Activated CD4-positive, alpha-beta T cell treated with anti-CD3 and anti-CD28 coated beads, Interleukin-2, amount 10 ng/mL, durations not matched to agents 24 days and 14 days (primary cell): ENCODE measurements at regions of chr6 and their contacts with region 1.

Region 1: DNA sequence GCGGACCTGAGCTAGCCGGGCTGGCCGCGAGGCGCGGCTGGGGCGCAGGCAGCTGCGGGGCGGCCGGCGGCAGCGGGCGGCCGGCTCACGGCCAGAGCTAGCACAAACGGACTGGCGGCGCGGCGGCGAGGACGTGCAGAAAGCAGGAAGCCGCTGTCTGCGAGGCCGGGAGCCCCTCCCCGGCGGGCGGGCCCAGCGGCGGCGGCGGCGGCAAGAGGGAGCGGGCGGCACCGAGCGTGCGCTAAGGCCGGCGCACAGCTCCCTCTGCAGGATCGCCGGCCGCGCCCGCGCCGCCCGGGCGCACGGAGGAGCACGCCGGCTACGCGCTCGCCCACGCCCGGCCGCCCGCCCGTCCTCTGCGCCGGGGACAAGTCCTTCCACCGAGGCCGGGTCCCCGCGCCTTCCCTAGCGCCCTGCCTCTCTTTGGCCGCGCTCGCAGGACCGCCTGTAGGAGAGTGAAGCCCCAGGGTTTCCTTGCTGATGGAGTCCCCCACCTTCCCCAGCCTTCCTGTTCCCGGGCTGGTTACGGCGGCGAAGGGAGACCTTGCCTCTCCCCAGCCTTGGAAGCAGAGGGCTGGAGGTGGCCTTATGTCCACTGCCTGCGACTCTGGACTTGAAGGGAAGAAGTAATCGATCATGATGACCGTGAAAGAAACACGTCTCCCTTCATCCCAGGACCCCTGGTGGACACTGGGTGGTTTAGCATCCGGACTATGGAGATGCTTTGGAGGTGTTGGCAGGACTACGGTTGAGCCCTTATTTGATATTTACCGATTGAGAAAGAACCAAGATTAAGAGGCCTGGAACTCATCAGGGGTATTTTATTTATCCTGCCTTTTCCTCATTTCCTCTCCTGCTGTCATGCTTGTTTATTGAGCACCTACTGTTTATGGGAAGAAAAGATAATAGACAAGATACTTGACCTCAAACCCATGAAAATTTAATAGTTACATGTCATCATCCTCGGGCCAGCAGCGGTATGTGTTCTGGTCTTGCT is at the start of gene PREP:
- DNase-seq: peak; percentile 96
- H3K4me3 Mint-ChIP-seq: peak within 1 kb of the TSS; percentile 95
- H3K27ac Mint-ChIP-seq: peak within 1 kb of the TSS; percentile 87
- H3K4me1 Mint-ChIP-seq: peaks cover 45% of the 10 kb centered on the region
- H3K27me3 Mint-ChIP-seq: peaks cover 10% of the 10 kb centered on the region
- total RNA-seq, gene PREP: 55.2 and 56.2 TPM in 2 replicates

Region 2: GRCh38 chr6:104789770-104790190 is 613.5 kb before region 1 on chr6:
- intact Hi-C with region 1: loop called (anchors 10 kb)
- DNase-seq: peak; percentile 66
- H3K4me3 Mint-ChIP-seq: peak overlapping the region; percentile 72
- H3K27ac Mint-ChIP-seq: peak overlapping the region; percentile 97
- H3K4me1 Mint-ChIP-seq: peaks cover 32% of the 10 kb centered on the region
- H3K27me3 Mint-ChIP-seq: no peaks in the 10 kb centered on the region

Region 3: DNA sequence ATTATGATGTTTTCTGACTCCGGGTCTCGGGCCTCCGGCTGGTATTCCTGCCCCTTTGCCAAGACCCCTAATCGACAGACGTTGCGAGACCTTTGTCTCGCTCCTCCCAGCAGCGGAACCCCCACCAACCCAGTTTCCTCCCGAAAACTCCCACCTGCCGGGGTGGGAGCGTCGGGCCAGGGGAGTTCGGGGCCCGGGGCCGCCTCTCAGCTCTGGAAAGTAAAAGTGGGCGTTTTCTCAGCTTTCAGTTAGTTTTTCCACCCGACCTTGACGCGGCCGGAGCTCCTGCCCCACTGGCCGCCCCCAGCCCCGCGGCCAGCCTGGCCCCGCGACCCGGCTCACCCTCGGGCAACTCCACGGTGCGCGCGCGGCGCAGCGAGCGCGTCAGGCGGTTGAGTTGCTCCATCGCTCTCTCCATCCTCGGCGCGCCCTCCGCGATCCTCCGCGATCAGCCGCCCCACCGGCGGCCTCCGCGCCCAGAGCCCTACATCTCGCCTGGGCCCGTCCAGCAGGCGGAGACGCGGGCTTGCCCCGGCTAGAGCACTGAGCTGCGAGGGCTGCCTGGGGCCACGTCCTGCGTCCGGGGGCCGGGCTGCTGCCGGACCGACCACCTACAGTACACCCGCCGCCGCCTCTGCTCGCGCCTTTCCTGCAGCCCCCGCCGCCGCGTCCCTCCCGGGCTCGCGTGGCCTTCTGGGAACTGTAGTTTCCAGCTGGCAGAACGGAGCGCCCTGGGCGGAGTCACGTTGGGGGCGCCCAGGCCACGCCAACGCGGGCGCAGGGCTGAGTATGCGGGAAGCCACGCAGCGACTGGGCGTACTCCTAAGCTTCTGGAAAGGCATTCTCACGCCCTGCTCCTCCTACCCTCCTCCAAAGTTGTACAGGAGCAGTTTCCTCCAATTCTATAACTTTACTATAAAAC is 543.8 kb before region 1 on chr6 and contains the start of gene HACE1:
- intact Hi-C with region 1: loop called (anchors 5 kb)
- DNase-seq: peak; percentile 97
- H3K4me3 Mint-ChIP-seq: peak within 1 kb of the TSS; percentile 98
- H3K27ac Mint-ChIP-seq: peak within 1 kb of the TSS; percentile 90
- H3K4me1 Mint-ChIP-seq: peaks cover 24% of the 10 kb centered on the region
- H3K27me3 Mint-ChIP-seq: no peaks in the 10 kb centered on the region
- total RNA-seq, gene HACE1: 18.6 and 21.3 TPM in 2 replicates

Region 4: GRCh38 chr6:105087571-105088211 is 315.5 kb before region 1 on chr6:
- intact Hi-C with region 1: loop called (anchors 1 kb)
- DNase-seq: peak; percentile 77
- H3K4me3 Mint-ChIP-seq: no peak overlapping the region
- H3K27ac Mint-ChIP-seq: no peak overlapping the region
- H3K4me1 Mint-ChIP-seq: no peaks in the 10 kb centered on the region
- H3K27me3 Mint-ChIP-seq: peaks cover 4% of the 10 kb centered on the region

Region 5: DNA sequence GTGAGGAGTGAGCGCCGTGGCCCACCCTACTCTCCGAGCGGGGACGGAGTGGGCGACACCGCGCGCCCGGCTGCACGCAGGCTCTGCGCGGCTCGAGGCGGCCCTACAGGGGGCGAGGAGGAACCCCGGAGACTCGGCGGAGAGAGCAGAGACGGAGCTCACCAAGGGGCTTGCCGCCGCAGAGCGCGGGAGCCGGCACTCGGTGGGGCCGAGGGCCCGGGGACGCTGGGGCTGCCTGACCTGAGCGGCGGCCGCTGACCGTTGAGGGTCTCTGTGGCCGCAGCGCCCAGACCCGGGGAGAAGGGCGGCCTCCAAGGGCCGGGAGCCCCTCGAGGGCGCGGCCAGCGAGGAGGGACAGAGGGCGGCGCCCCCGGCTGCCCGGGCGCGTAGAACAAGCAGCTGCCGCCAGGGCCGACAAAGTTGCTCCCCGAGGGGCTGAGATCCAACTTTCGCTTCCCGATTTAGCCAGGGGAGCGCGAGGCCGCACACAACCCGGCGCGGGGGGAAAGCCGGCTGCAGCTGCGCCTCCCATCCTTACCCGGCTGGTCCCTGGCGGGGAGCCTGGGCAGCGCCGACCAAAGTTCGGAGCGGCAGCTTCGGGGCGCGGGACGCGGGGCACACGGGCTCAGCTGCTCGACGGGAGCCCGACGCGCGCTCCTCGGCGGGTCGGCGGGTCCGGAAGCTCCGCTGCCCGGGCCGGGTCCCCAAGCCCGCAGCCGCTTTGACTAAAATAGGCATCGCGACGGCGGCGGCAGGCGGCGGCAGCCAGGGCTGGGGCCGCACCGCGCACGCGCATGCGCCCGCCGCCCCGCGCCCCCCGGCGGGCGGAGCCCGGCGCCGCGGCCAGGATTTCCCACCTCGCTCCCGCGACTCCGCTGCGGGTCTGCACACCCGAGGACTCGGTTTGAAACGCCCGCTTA is 266.5 kb before region 1 on chr6:
- intact Hi-C with region 1: loop called (anchors 5 kb)
- DNase-seq: peak; percentile 70
- H3K4me3 Mint-ChIP-seq: peak overlapping the region; percentile 68
- H3K27ac Mint-ChIP-seq: no peak overlapping the region
- H3K4me1 Mint-ChIP-seq: peaks cover 4% of the 10 kb centered on the region
- H3K27me3 Mint-ChIP-seq: peaks cover 80% of the 10 kb centered on the region